GM13977 (cell line): ENCODE measurements at regions of chr21 and their contacts with region 1.

Region 1: GRCh38 chr21:29232601-29233546 is 65.8 kb upstream of the BACH1 start:
- DNase-seq: no peak
- CTCF ChIP-seq: peak; percentile 39

Region 2: GRCh38 chr21:29298348-29299045 is 65.6 kb after region 1 on chr21 and contains the start of gene BACH1:
- in situ Hi-C with region 1: loop called (anchors 10 kb)
- DNase-seq: peak; percentile 95
- CTCF ChIP-seq: peak; percentile 55